GM12878 (cell line): ENCODE measurements at regions of chr2 and their contacts with region 1.

Region 1: DNA sequence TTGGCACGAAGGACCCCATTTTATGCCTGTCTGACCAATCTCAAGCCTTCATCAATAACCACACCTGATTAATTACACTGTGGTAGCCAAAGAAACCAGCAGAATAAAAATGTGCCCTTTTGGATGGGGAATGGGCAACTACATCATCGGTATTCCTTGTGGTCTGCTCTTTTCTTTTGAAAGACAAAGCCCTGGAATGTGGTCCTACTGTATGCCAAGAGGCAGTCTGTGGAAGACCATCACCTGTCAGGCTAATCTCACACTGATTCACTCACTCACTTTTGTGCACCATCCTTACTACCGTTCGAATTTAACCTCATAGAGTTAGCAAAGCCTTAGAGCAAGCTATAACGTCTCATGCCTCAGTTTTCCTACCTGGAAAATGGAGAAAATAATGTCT is 275.2 kb upstream of the LRRTM1 start:
- DNase-seq: no peak
- ATAC-seq: no peak
- H3K4me3 ChIP-seq: no peak overlapping the region
- H3K27ac ChIP-seq: no peak overlapping the region
- H3K4me1 ChIP-seq: no peaks in the 10 kb centered on the region
- H3K27me3 ChIP-seq: no peaks in the 10 kb centered on the region
- CTCF ChIP-seq: no peak
- EP300 ChIP-seq: no peak
- POLR2A ChIP-seq: no peak
- RAD21 ChIP-seq: no peak

Region 2: GRCh38 chr2:80591233-80591632 is 11.5 kb after region 1 on chr2:
- CTCF ChIA-PET with region 1: interaction called, 4 read pairs
- POLR2A ChIA-PET with region 1: no interaction called
- RAD21 ChIA-PET with region 1: no interaction called
- SMC1A ChIA-PET with region 1: interaction called, 11 read pairs
- in situ Hi-C with region 1: no loop called
- intact Hi-C with region 1: no loop called
- DNase-seq: no peak
- ATAC-seq: peak; percentile 58
- H3K4me3 ChIP-seq: no peak overlapping the region
- H3K27ac ChIP-seq: no peak overlapping the region
- H3K4me1 ChIP-seq: no peaks in the 10 kb centered on the region; the same call in 1 of the 2 replicates
- H3K27me3 ChIP-seq: no peaks in the 10 kb centered on the region
- CTCF ChIP-seq: no peak
- EP300 ChIP-seq: no peak
- POLR2A ChIP-seq: no peak
- RAD21 ChIP-seq: no peak

Region 3: GRCh38 chr2:80610108-80610507 is 30.4 kb after region 1 on chr2:
- CTCF ChIA-PET with region 1: no interaction called
- POLR2A ChIA-PET with region 1: no interaction called
- RAD21 ChIA-PET with region 1: no interaction called
- SMC1A ChIA-PET with region 1: no interaction called
- in situ Hi-C with region 1: no loop called
- intact Hi-C with region 1: no loop called
- DNase-seq: no peak
- ATAC-seq: no peak
- H3K4me3 ChIP-seq: no peak overlapping the region
- H3K27ac ChIP-seq: no peak overlapping the region
- H3K4me1 ChIP-seq: no peaks in the 10 kb centered on the region
- H3K27me3 ChIP-seq: no peaks in the 10 kb centered on the region
- CTCF ChIP-seq: no peak
- EP300 ChIP-seq: no peak
- POLR2A ChIP-seq: no peak
- RAD21 ChIP-seq: no peak

Region 4: GRCh38 chr2:80852808-80853139 is 273.0 kb after region 1 on chr2:
- CTCF ChIA-PET with region 1: no interaction called
- POLR2A ChIA-PET with region 1: no interaction called
- RAD21 ChIA-PET with region 1: no interaction called
- SMC1A ChIA-PET with region 1: no interaction called
- in situ Hi-C with region 1: no loop called
- intact Hi-C with region 1: no loop called
- DNase-seq: no peak
- ATAC-seq: peak; percentile 73
- H3K4me3 ChIP-seq: no peak overlapping the region
- H3K27ac ChIP-seq: no peak overlapping the region
- H3K4me1 ChIP-seq: no peaks in the 10 kb centered on the region
- H3K27me3 ChIP-seq: no peaks in the 10 kb centered on the region
- CTCF ChIP-seq: peak; percentile 12 to 31 (median 25); a peak in 3 of 6 replicates
- EP300 ChIP-seq: no peak
- POLR2A ChIP-seq: no peak
- RAD21 ChIP-seq: peak; percentile 34

Region 5: GRCh38 chr2:81225756-81226155 is 646.0 kb after region 1 on chr2:
- CTCF ChIA-PET with region 1: no interaction called
- POLR2A ChIA-PET with region 1: no interaction called
- RAD21 ChIA-PET with region 1: no interaction called
- SMC1A ChIA-PET with region 1: no interaction called
- in situ Hi-C with region 1: no loop called
- intact Hi-C with region 1: no loop called
- DNase-seq: no peak
- ATAC-seq: no peak
- H3K4me3 ChIP-seq: no peak overlapping the region
- H3K27ac ChIP-seq: no peak overlapping the region
- H3K4me1 ChIP-seq: no peaks in the 10 kb centered on the region
- H3K27me3 ChIP-seq: no peaks in the 10 kb centered on the region
- CTCF ChIP-seq: no peak
- EP300 ChIP-seq: no peak
- POLR2A ChIP-seq: no peak
- RAD21 ChIP-seq: no peak